Endothelial cell of umbilical vein (primary cell): ENCODE measurements at regions of chr12 and their contacts with region 1.

Region 1: GRCh38 chr12:29241821-29242591 is 92.9 kb downstream of the FAR2 start:
- DNase-seq: peak; percentile 84
- H3K4me3 ChIP-seq: peak overlapping the region in 1 of 3 experiments; percentile 15
- H3K27ac ChIP-seq: peak overlapping the region; percentile 94
- H3K4me1 ChIP-seq: peaks cover 68% of the 10 kb centered on the region
- H3K27me3 ChIP-seq: no peaks in the 10 kb centered on the region
- CTCF ChIP-seq: peak in 1 of 2 donors; percentile 8
- POLR2A ChIP-seq: peak; percentile 28

Region 2: GRCh38 chr12:28770329-28770728 is 471.7 kb before region 1 on chr12:
- CTCF ChIA-PET with region 1: no interaction called
- POLR2A ChIA-PET with region 1: no interaction called
- dilution Hi-C with region 1: no loop called
- intact Hi-C with region 1: loop called (anchors 10 kb)
- DNase-seq: peak; percentile 94
- H3K4me3 ChIP-seq: no peak overlapping the region
- H3K27ac ChIP-seq: peak overlapping the region; percentile 77
- H3K4me1 ChIP-seq: peaks cover 27% of the 10 kb centered on the region
- H3K27me3 ChIP-seq: no peaks in the 10 kb centered on the region
- CTCF ChIP-seq: no peak
- POLR2A ChIP-seq: peak; percentile 58

Region 3: DNA sequence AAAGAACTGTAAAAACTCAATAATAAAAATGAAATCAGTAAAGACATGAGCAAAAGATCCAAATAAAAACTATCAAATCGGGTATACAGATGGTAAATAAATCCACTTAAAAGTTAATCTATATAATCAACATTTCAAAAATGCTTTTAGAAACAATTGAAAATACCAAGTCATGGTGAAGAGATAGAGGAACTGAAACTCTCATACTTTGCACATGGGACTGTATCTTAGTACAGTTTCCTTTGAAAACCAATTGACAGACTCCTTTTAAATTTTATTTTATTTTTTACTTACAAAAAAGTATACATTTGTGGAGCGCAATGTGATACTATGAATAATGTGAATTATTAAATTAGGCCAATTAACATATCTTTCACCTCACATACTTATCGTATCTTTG is 191.5 kb before region 1 on chr12:
- CTCF ChIA-PET with region 1: no interaction called
- POLR2A ChIA-PET with region 1: no interaction called
- dilution Hi-C with region 1: no loop called
- intact Hi-C with region 1: no loop called
- DNase-seq: no peak
- H3K4me3 ChIP-seq: no peak overlapping the region
- H3K27ac ChIP-seq: no peak overlapping the region
- H3K4me1 ChIP-seq: no peaks in the 10 kb centered on the region
- H3K27me3 ChIP-seq: no peaks in the 10 kb centered on the region
- CTCF ChIP-seq: no peak
- POLR2A ChIP-seq: no peak

Region 4: GRCh38 chr12:29148911-29149690 is 92.9 kb before region 1 on chr12 and contains the start of gene FAR2:
- CTCF ChIA-PET with region 1: interaction called, 3 read pairs
- POLR2A ChIA-PET with region 1: no interaction called
- dilution Hi-C with region 1: no loop called
- intact Hi-C with region 1: loop called (anchors 1 kb)
- DNase-seq: peak; percentile 61
- H3K4me3 ChIP-seq: peak within 1 kb of the TSS; percentile 67 to 80 (median 75)
- H3K27ac ChIP-seq: peak within 1 kb of the TSS; percentile 91
- H3K4me1 ChIP-seq: peaks cover 29% of the 10 kb centered on the region
- H3K27me3 ChIP-seq: no peaks in the 10 kb centered on the region
- CTCF ChIP-seq: no peak
- POLR2A ChIP-seq: peak; percentile 79
- total RNA-seq, gene FAR2: 61.7 and 66.3 TPM in 2 replicates

Region 5: DNA sequence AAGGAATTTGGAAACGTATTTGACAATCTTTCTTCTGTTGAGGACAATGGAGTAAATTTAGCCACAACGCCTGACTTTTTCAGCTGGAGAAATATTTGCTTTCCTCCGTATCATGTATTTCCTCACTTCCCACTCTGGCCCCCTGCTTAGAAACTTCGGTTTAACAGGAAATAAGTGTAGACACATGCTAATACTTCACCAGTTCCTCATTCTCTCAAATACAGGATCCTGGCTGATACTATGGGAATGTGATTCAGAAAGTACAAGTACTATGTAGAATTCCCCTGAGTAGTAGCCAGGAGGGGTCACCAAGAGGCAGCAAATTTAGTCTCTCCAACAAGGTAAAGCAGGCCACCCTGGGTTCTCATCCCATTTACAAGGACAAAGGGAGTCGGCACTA is 34.9 kb before region 1 on chr12:
- CTCF ChIA-PET with region 1: interaction called, 3 read pairs
- POLR2A ChIA-PET with region 1: no interaction called
- dilution Hi-C with region 1: no loop called
- intact Hi-C with region 1: loop called (anchors 1 kb)
- DNase-seq: peak; percentile 89
- H3K4me3 ChIP-seq: no peak overlapping the region
- H3K27ac ChIP-seq: no peak overlapping the region
- H3K4me1 ChIP-seq: no peaks in the 10 kb centered on the region
- H3K27me3 ChIP-seq: no peaks in the 10 kb centered on the region
- CTCF ChIP-seq: no peak
- POLR2A ChIP-seq: no peak

Region 6: DNA sequence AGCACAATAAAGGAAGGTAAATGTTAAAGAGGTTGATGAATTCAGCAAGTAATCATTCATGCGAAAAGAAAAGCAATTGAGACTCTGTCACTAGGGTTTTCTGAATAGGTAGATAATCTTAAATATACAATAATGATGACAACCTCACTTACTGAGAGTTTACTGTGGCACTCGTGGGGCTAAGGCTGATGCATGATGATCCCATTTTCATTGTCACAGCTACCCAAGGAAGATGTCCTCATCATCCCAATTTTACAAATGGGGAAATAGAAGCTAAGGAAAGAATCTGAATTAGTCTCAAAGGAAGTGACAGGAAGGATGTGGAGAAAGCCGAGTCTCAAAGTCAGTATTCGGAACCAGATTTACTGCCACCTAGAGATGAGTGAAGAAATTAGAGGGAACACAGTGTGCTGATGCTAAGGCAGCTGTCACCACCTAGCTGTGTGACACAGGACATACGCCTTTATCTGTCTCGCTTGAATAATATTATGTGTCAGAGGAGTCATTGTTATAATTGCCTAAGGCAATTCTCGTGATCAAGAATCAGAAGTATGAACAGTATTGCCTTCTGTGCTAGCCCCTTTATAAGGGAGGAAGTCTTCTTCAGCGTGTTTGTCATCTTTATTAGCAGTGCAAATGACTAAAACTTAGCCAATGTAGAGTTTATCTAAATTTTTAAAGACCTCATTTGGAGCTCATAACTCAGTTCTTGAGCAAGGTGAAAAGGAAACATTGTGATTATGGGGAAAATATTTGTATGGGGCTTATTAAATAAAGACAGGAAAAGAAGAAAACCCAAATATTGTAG is 75.8 kb after region 1 on chr12:
- CTCF ChIA-PET with region 1: no interaction called
- POLR2A ChIA-PET with region 1: no interaction called
- dilution Hi-C with region 1: no loop called
- intact Hi-C with region 1: loop called (anchors 5 kb)
- DNase-seq: peak; percentile 72
- H3K4me3 ChIP-seq: no peak overlapping the region
- H3K27ac ChIP-seq: no peak overlapping the region
- H3K4me1 ChIP-seq: peaks cover 17% of the 10 kb centered on the region
- H3K27me3 ChIP-seq: no peaks in the 10 kb centered on the region
- CTCF ChIP-seq: peak; percentile 61 to 66
- POLR2A ChIP-seq: no peak